Panc1 (cell line): ENCODE measurements at regions of chr15 and their contacts with region 1.

Region 1: DNA sequence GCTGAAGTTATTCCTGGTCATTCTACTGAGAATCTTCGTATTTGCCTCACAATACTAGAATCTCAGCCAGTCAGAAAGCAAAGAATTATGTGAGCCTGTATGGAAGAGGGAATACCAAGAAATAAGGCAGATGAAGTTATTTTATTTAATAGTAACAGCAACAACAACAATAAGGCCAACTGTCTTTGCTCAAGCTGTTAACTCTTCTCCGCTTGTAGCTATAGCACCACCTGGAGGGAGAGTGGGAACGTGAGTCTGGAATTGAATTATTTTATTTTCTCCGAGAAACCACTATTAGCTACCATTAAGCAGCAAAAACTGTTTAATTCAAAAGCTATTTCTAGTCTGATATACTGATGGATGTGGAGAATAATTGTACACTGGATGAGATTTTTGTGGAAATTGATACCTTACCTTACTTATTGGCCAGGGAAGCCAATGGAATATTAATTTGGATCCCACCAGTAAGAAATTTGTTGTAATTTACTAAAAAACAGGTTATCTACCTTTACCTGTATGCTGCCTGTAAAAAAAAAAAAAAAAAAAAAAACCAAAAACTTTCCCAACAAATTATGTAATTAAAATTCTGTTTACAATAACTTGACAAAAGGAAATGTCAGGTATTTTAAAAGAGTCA is 50.1 kb downstream of the CALML4 start:
- DNase-seq: peak; percentile 30
- ATAC-seq: peak; percentile 80
- H3K4me3 ChIP-seq: no peak overlapping the region
- H3K27ac ChIP-seq: peak overlapping the region; percentile 73
- H3K4me1 ChIP-seq: peaks cover 7% of the 10 kb centered on the region
- H3K27me3 ChIP-seq: no peaks in the 10 kb centered on the region
- CTCF ChIP-seq: peak; percentile 79; the same call in 1 of the 2 replicates

Region 2: DNA sequence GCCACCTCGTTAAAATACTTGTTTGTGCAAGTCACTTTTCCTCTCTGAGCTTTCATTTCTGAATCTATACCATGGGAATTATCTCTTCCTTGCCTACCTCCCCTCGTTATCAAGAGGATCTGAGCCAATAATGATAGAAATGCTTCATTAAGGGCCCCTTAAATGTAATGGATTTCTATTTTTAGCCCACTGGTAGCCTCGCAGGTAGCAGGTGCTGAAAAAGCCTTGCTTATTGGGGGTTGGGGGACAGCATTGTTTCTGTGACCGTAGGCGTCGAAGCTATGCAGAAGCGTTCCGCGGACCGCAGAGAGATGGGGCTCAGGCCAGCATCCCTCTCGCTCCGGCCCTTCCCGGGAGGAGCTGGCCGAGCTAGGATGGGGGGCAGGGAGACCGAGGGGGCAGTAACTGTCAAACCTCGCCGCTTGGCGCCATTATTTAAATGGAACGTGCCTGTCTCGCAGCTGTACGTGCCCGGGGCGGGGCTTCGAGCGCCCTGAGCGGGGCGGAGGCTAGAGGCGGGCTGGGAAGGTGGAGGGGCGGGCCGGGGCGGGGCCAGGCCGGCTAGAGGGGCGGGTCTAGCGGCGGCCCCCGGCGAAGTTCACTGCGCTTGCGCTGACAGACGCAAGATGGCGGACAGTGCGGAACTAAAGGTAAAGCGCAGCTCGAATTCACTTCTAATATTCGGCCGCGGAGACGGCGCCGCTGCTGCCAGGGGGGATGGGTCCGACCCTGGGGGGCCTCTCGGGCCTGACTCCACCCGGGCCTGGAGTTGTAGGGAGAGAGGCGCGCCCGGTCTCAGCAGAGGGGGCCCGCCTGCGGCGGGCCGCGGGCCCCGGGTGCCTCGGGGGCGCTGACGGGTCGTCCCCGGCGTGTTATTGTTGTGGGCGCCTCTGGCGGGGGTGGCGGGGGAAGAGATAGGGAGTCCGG is 101.1 kb before region 1 on chr15 and contains the start of gene PIAS1:
- CTCF ChIA-PET with region 1: no interaction called
- POLR2A ChIA-PET with region 1: interaction called, 5 read pairs
- in situ Hi-C with region 1: no loop called
- intact Hi-C with region 1: loop called (anchors 10 kb)
- DNase-seq: peak; percentile 41
- ATAC-seq: peak; percentile 96
- H3K4me3 ChIP-seq: peak within 1 kb of the TSS; percentile 61 to 87
- H3K27ac ChIP-seq: peak within 1 kb of the TSS; percentile 89
- H3K4me1 ChIP-seq: peaks cover 44% of the 10 kb centered on the region
- H3K27me3 ChIP-seq: no peaks in the 10 kb centered on the region
- CTCF ChIP-seq: no peak; the same call in 1 of the 2 replicates
- total RNA-seq, gene PIAS1: 44.5 TPM

Region 3: GRCh38 chr15:68948951-68949526 is 794.0 kb after region 1 on chr15:
- CTCF ChIA-PET with region 1: no interaction called
- POLR2A ChIA-PET with region 1: no interaction called
- in situ Hi-C with region 1: no loop called
- intact Hi-C with region 1: no loop called
- DNase-seq: no peak
- ATAC-seq: no peak
- H3K4me3 ChIP-seq: no peak overlapping the region
- H3K27ac ChIP-seq: no peak overlapping the region
- H3K4me1 ChIP-seq: no peaks in the 10 kb centered on the region
- H3K27me3 ChIP-seq: peaks cover 13% of the 10 kb centered on the region
- CTCF ChIP-seq: no peak